ENCODE measurements at regions of chr1 and their contacts with region 1.

Region 1: DNA sequence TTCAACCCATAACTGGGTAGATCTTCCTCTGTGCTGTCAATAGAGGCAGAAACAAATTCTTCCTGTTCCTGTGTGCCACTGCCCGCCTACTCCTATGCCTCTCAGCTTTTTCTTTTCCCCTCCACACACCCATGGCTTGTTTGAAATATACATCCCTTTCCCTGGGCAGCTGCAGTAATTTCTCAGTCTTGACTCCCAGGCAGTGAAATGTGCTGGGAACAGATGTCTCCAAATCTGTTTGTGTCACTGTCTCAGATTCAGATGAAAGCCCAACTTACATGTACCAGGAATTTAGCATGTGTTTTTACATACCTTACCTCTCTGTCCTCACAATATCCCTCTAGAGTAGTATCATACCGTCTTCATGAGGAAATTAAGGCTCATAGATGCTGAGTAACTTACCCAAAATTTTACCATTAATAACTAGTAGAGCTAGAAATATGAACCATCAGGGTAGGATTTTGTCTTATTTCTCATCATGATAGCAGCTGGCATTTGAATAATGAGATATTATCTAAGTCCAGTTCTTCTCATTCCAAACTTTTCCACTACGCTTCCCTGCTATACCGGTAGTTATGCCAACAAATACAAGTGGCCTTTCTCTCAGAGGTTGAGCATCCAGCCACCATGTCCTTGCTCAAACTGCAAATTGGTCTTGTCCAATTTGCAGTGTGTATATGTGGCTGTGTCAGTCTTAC is 4.7 kb upstream of the VASH2 start:
- DNase-seq: no peak
- ATAC-seq: no peak
- H3K4me3 ChIP-seq: no peak overlapping the region
- H3K27ac ChIP-seq: no peak overlapping the region
- H3K4me1 ChIP-seq: peaks cover 23% of the 10 kb centered on the region
- H3K27me3 ChIP-seq: no peaks in the 10 kb centered on the region
- CTCF ChIP-seq: no peak
- EP300 ChIP-seq: no peak
- POLR2A ChIP-seq: no peak
- RAD21 ChIP-seq: no peak

Region 2: DNA sequence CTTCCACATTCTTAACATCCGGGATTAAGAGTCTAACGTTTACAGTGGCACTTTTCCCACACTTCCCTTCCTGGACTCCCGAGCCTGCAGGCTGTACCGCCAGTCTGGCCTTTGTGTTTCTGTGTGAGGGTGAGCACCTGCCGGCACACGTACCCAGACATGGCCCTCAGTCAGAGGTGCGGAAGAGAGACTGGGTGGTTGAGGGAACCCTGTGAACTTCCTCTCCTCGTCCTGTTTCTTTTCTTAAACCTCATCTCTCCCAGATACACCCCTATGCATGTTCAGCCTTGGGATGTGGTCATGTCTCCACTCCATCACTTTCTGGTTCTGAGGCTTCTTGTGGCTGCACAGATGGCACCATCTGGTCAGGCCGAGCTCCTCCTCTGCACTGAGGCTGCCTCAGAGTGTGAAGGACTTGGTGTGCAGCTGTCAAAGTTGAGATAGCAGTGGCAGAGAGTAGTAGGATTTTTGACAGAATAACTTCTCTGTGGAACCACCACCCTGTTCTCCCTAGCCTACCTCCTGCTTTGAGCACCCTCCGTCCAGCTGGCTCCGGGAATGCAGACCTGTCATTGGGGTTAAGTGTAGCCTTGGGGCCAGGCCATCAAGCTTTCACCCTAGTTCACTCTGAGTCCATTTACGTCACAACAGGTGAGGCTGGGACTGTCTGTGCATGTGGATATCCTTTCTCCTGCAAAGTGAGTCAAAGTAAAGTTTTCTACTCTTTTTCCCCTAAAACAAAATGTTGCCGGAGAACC is 36.1 kb after region 1 on chr1:
- CTCF ChIA-PET with region 1: no interaction called
- POLR2A ChIA-PET with region 1: no interaction called
- in situ Hi-C with region 1: no loop called
- intact Hi-C with region 1: loop called (anchors 5 kb)
- DNase-seq: no peak
- ATAC-seq: peak; percentile 24; the same call in 2 of the 3 replicates
- H3K4me3 ChIP-seq: no peak overlapping the region
- H3K27ac ChIP-seq: no peak overlapping the region
- H3K4me1 ChIP-seq: peaks cover 11% of the 10 kb centered on the region; the same call in 1 of the 2 replicates
- H3K27me3 ChIP-seq: no peaks in the 10 kb centered on the region
- CTCF ChIP-seq: no peak
- EP300 ChIP-seq: no peak
- POLR2A ChIP-seq: no peak
- RAD21 ChIP-seq: no peak

Measured in HepG2 (cell line).